HAP-1 (cell line): ENCODE measurements at regions of chrX and their contacts with region 1.

Region 1: GRCh38 chrX:132092439-132093065 is 35.3 kb downstream of the FRMD7 start:
- DNase-seq: peak; percentile 70 to 78
- H3K4me3 ChIP-seq: no peak overlapping the region
- H3K4me1 ChIP-seq: no peaks in the 10 kb centered on the region
- H3K27me3 ChIP-seq: peaks cover 5% of the 10 kb centered on the region; the same call in 1 of the 2 replicates

Region 2: DNA sequence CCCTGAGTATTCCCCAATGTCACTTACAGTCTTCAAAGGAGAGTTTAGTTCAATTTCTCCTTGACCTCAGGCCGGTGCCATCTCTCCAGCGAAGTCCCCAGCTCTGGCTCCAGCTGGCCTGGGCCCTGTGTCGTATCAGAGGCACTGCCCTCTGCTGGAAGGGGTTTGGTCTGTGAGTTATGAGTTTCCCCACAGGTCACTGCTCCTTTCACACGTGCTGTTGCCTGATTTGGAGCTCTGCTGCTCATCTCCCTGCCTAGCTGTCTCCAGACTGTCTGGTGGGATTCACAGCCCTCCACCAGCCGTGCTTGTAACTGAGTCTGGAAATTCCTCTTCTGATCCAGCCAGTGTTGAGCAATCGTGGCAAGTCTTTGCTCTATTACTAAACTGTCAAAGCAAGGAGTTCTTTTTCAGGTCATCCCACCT is 126.8 kb after region 1 on chrX and contains the start of gene RAP2C:
- in situ Hi-C with region 1: loop called (anchors 10 kb)
- DNase-seq: peak; percentile 83 to 88
- H3K4me3 ChIP-seq: peak within 1 kb of the TSS; percentile 88
- H3K4me1 ChIP-seq: peaks cover 18% of the 10 kb centered on the region
- H3K27me3 ChIP-seq: no peaks in the 10 kb centered on the region